HepG2 (cell line): ENCODE measurements at regions of chr14 and their contacts with region 1.

Region 1: GRCh38 chr14:59281613-59282377 is 93.3 kb downstream of the DAAM1 start:
- DNase-seq: no peak
- ATAC-seq: no peak
- H3K4me3 ChIP-seq: no peak overlapping the region
- H3K27ac ChIP-seq: no peak overlapping the region
- H3K4me1 ChIP-seq: peaks cover 48% of the 10 kb centered on the region
- H3K27me3 ChIP-seq: no peaks in the 10 kb centered on the region
- CTCF ChIP-seq: no peak
- EP300 ChIP-seq: no peak
- POLR2A ChIP-seq: no peak
- RAD21 ChIP-seq: no peak

Region 2: DNA sequence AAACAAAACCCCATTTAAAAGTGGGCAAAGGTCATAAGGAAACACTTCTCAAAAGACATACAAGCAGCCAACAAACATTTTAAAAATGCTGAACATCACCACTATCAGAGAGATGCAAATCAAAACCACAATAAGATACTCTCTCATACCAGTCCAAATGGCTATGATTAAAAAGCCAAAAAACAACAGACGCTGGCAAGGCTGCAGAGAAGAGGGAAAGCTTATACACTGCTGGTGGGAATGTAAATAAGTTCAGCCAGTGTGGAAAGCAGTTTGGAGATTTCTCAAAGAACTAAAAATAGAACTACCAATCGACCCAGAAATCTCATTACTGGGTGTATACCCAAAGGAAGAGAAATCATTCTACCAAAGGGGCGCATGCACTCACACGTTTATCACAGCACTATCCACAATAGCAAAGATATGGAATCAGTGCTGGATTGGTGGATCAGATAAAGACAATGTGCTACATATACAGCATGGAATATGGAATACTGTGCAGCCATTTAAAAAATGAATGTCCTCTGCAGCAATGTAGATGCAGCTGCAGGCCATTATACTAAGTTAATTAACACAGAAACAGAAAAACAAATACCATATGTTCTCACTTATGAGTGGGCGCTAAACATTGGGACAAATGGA is 195.4 kb before region 1 on chr14:
- CTCF ChIA-PET with region 1: no interaction called
- POLR2A ChIA-PET with region 1: no interaction called
- in situ Hi-C with region 1: no loop called
- intact Hi-C with region 1: no loop called
- DNase-seq: no peak
- ATAC-seq: no peak
- H3K4me3 ChIP-seq: no peak overlapping the region
- H3K27ac ChIP-seq: no peak overlapping the region
- H3K4me1 ChIP-seq: no peaks in the 10 kb centered on the region
- H3K27me3 ChIP-seq: no peaks in the 10 kb centered on the region
- CTCF ChIP-seq: no peak
- EP300 ChIP-seq: no peak
- POLR2A ChIP-seq: no peak
- RAD21 ChIP-seq: no peak

Region 3: DNA sequence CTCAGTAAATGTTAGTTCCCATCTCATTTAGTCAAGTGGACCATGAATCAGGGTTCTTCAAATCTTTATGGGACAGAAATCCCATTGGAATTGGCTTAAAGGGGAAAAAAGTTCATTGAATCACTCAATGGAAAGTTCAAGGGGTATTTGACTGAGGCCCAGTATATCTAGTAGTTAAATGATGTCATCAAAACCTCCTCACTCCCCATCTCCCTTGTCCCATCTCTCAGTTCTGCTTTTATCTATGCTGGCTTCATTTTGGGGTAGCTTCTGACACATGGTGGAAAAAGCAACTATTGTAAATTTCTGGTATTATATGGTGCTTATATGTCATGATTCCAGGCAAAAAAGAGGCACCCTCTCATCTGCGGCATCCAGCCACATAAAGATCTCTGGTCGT is 41.4 kb before region 1 on chr14:
- CTCF ChIA-PET with region 1: no interaction called
- POLR2A ChIA-PET with region 1: no interaction called
- in situ Hi-C with region 1: no loop called
- intact Hi-C with region 1: loop called (anchors 1 kb)
- DNase-seq: no peak
- ATAC-seq: no peak
- H3K4me3 ChIP-seq: no peak overlapping the region
- H3K27ac ChIP-seq: no peak overlapping the region
- H3K4me1 ChIP-seq: peaks cover 28% of the 10 kb centered on the region
- H3K27me3 ChIP-seq: no peaks in the 10 kb centered on the region
- CTCF ChIP-seq: no peak
- EP300 ChIP-seq: no peak
- POLR2A ChIP-seq: no peak
- RAD21 ChIP-seq: no peak

Region 4: DNA sequence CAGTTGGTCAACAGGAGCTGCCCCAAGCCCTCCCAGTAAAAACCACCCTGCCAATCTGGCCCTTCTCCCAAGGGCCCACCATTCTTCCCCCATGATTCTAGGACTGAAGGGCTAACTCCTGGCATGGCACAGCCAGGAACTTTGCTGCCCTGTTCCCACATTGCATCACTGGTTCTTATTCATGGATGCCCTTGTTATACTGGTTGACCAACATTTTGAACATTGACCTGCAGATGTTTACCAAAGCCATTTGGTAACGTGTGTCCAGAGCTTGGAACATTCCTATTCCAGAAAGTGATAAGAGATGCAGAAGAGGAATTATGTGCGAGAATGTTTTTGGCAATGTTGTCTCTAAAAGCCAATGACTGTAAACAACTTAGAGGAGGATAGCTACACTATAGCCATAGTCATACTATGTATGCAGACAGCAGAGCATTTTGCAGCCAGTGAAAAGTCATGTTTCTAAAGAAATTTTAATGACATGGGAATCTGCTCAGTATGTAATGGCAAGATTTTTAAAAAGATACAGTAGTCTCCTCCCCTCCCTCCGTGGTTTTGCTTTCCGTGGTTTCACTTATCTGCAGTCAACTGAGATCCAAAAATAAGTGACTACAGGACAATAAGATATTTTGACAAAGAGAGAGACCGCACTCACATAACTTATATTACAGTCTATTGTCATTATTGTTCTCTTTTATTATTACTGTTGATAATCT is 15.4 kb after region 1 on chr14:
- CTCF ChIA-PET with region 1: no interaction called
- POLR2A ChIA-PET with region 1: no interaction called
- in situ Hi-C with region 1: no loop called
- intact Hi-C with region 1: loop called (anchors 2 kb)
- DNase-seq: peak; percentile 94
- ATAC-seq: peak; percentile 91
- H3K4me3 ChIP-seq: no peak overlapping the region
- H3K27ac ChIP-seq: peak overlapping the region; percentile 67
- H3K4me1 ChIP-seq: peaks cover 83% of the 10 kb centered on the region
- H3K27me3 ChIP-seq: no peaks in the 10 kb centered on the region
- CTCF ChIP-seq: no peak
- EP300 ChIP-seq: peak; percentile 61 to 89; a peak in 3 of 4 replicates
- POLR2A ChIP-seq: no peak
- RAD21 ChIP-seq: no peak

Region 5: DNA sequence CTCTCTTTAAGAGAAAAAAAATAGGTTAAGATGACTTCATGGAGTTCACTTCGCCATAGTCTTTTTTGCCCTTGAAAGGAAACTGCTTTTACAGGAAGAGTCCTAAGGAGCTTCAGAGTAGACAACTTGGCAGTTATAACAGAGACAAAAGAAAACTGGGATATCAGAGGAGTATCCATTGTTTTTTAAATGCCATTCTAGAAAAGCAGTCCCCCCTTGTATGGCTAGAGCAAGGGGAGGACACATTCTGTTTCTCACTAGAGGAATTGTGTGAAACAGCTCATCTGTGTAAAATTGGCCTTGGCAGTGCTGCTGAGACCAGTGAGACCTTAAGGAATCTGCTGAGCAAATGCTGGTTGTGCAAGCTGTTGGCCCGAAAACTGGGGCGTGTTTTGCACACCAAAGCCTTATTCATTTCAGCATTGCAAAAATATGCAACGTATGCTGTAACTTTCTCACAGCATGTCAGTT is 55.4 kb after region 1 on chr14:
- CTCF ChIA-PET with region 1: no interaction called
- POLR2A ChIA-PET with region 1: no interaction called
- in situ Hi-C with region 1: no loop called
- intact Hi-C with region 1: no loop called
- DNase-seq: no peak
- ATAC-seq: no peak
- H3K4me3 ChIP-seq: no peak overlapping the region
- H3K27ac ChIP-seq: no peak overlapping the region
- H3K4me1 ChIP-seq: peaks cover 16% of the 10 kb centered on the region
- H3K27me3 ChIP-seq: no peaks in the 10 kb centered on the region
- CTCF ChIP-seq: no peak
- EP300 ChIP-seq: no peak
- POLR2A ChIP-seq: no peak
- RAD21 ChIP-seq: no peak

Region 6: DNA sequence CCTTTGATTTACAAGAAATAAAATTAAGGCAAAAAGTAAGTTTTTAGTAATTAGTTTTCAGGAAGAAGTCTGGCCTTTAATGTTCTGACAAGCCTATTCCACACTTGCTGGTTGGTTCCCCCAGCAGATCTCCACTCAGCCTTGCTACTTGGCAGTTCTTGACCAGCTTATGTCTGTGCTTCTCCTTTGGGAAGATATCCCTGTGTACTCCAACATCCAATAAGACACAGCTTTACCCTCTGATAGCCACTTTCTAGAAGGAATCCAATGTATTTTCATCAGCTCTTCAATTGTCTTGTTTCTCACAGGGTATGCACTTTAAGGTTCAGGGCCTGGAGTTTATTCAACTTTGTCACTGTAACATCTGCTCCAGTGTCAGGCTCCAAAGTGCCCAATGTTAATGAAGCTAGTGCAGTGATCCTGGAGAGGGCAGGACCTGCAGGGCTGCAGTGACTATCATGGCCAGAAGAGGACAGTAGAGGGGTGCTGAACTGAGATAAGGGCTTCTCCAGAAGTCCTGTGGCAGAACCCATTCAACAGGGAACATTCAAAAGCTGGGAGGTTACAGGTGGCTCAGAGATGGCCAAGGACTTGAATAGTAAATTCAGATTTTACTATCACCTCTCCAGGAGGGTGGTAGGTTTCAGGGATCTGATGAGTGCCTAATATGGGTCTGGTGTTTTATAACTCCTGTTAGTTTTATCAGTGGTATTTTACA is 225.4 kb after region 1 on chr14:
- CTCF ChIA-PET with region 1: no interaction called
- POLR2A ChIA-PET with region 1: no interaction called
- in situ Hi-C with region 1: no loop called
- intact Hi-C with region 1: no loop called
- DNase-seq: peak; percentile 62
- ATAC-seq: peak; percentile 97
- H3K4me3 ChIP-seq: no peak overlapping the region
- H3K27ac ChIP-seq: no peak overlapping the region
- H3K4me1 ChIP-seq: peaks cover 30% of the 10 kb centered on the region
- H3K27me3 ChIP-seq: no peaks in the 10 kb centered on the region
- CTCF ChIP-seq: peak; percentile 87
- EP300 ChIP-seq: no peak
- POLR2A ChIP-seq: no peak
- RAD21 ChIP-seq: peak; percentile 66